ENCODE measurements at regions of chr12 and their contacts with region 1.

Region 1: GRCh38 chr12:64256166-64256800 is 34.2 kb upstream of the KICS2 start:
- DNase-seq: no peak
- H3K4me3 ChIP-seq: no peak overlapping the region
- H3K27ac ChIP-seq: no peak overlapping the region
- H3K4me1 ChIP-seq: no peaks in the 10 kb centered on the region
- H3K27me3 ChIP-seq: no peaks in the 10 kb centered on the region
- CTCF ChIP-seq: peak; percentile 33 to 71 (median 65)
- EP300 ChIP-seq: no peak
- POLR2A ChIP-seq: no peak

Region 2: GRCh38 chr12:63826006-63826585 is 430.2 kb before region 1 on chr12:
- intact Hi-C with region 1: loop called in 1 of 4 experiments (anchors 5 kb)
- DNase-seq: peak in 1 of 5 donors; percentile 27
- H3K4me3 ChIP-seq: no peak overlapping the region
- H3K27ac ChIP-seq: no peak overlapping the region
- H3K4me1 ChIP-seq: no peaks in the 10 kb centered on the region
- H3K27me3 ChIP-seq: no peaks in the 10 kb centered on the region
- CTCF ChIP-seq: peak; percentile 53 to 75 (median 59)
- EP300 ChIP-seq: no peak
- POLR2A ChIP-seq: no peak

Region 3: GRCh38 chr12:63836936-63837335 is 419.3 kb before region 1 on chr12:
- intact Hi-C with region 1: loop called (anchors 5 kb)
- DNase-seq: no peak
- H3K4me3 ChIP-seq: no peak overlapping the region
- H3K27ac ChIP-seq: no peak overlapping the region
- H3K4me1 ChIP-seq: no peaks in the 10 kb centered on the region
- H3K27me3 ChIP-seq: no peaks in the 10 kb centered on the region
- CTCF ChIP-seq: no peak
- EP300 ChIP-seq: no peak
- POLR2A ChIP-seq: no peak

Region 4: GRCh38 chr12:63843721-63844390 is 412.4 kb before region 1 on chr12:
- intact Hi-C with region 1: loop called in 3 of 4 experiments (anchors 5 kb)
- DNase-seq: peak; percentile 93 to 96 (median 94)
- H3K4me3 ChIP-seq: peak overlapping the region; percentile 83
- H3K27ac ChIP-seq: peak overlapping the region; percentile 90 to 93
- H3K4me1 ChIP-seq: peaks cover 6% of the 10 kb centered on the region
- H3K27me3 ChIP-seq: no peaks in the 10 kb centered on the region
- CTCF ChIP-seq: peak; percentile 89 to 100 (median 99)
- EP300 ChIP-seq: no peak
- POLR2A ChIP-seq: peak; percentile 40

Region 5: GRCh38 chr12:64171715-64172114 is 84.6 kb before region 1 on chr12:
- intact Hi-C with region 1: no loop called
- DNase-seq: no peak
- H3K4me3 ChIP-seq: no peak overlapping the region
- H3K27ac ChIP-seq: no peak overlapping the region
- H3K4me1 ChIP-seq: no peaks in the 10 kb centered on the region
- H3K27me3 ChIP-seq: no peaks in the 10 kb centered on the region
- CTCF ChIP-seq: no peak
- EP300 ChIP-seq: no peak
- POLR2A ChIP-seq: no peak

Region 6: GRCh38 chr12:64236549-64236948 is 19.7 kb before region 1 on chr12:
- intact Hi-C with region 1: loop called in 1 of 4 experiments (anchors 2 kb)
- DNase-seq: no peak
- H3K4me3 ChIP-seq: no peak overlapping the region
- H3K27ac ChIP-seq: no peak overlapping the region
- H3K4me1 ChIP-seq: peaks cover 6% of the 10 kb centered on the region
- H3K27me3 ChIP-seq: no peaks in the 10 kb centered on the region
- CTCF ChIP-seq: no peak
- EP300 ChIP-seq: no peak
- POLR2A ChIP-seq: no peak